Naive thymus-derived CD4-positive, alpha-beta T cell (primary cell): ENCODE measurements at regions of chr14 and their contacts with region 1.

Region 1: GRCh38 chr14:105300792-105301533 is at the start of gene BRF1:
- DNase-seq: peak; percentile 94 to 100 (median 99)
- ATAC-seq: peak; percentile 93
- H3K4me3 ChIP-seq: peak within 1 kb of the TSS; percentile 73
- H3K4me3 Mint-ChIP-seq: peak within 1 kb of the TSS; percentile 75 to 95 (median 90)
- H3K27ac ChIP-seq: peak within 1 kb of the TSS; percentile 94
- H3K27ac Mint-ChIP-seq: peak within 1 kb of the TSS; percentile 86 to 97 (median 94)
- H3K4me1 ChIP-seq: peaks cover 0 to 22% of the 10 kb centered on the region in 2 donors
- H3K4me1 Mint-ChIP-seq: peaks cover 34 to 52% (median 40%) of the 10 kb centered on the region in 7 donors
- H3K27me3 ChIP-seq: no peaks in the 10 kb centered on the region
- H3K27me3 Mint-ChIP-seq: no peaks in the 10 kb centered on the region
- total RNA-seq, gene BRF1: 49.8 to 75.7 (median 61.4) TPM

Region 2: GRCh38 chr14:104383996-104384775 is 916.8 kb before region 1 on chr14:
- CTCF ChIA-PET with region 1: no interaction called
- POLR2A ChIA-PET with region 1: no interaction called
- intact Hi-C with region 1: no loop called
- DNase-seq: no peak
- ATAC-seq: no peak
- H3K4me3 ChIP-seq: no peak overlapping the region
- H3K4me3 Mint-ChIP-seq: no peak overlapping the region
- H3K27ac ChIP-seq: no peak overlapping the region
- H3K27ac Mint-ChIP-seq: peak overlapping the region in 6 of 9 donors; percentile 18 to 77 (median 64)
- H3K4me1 ChIP-seq: peaks cover 5 to 7% of the 10 kb centered on the region in 2 donors
- H3K4me1 Mint-ChIP-seq: peaks cover 4 to 21% (median 10%) of the 10 kb centered on the region in 7 donors
- H3K27me3 ChIP-seq: no peaks in the 10 kb centered on the region
- H3K27me3 Mint-ChIP-seq: peaks cover 0 to 8% (median 0%) of the 10 kb centered on the region in 5 donors

Region 3: GRCh38 chr14:104800015-104800770 is 500.8 kb before region 1 on chr14:
- CTCF ChIA-PET with region 1: no interaction called
- POLR2A ChIA-PET with region 1: no interaction called
- intact Hi-C with region 1: loop called in 1 of 2 experiments (anchors 10 kb)
- DNase-seq: peak in 8 of 9 donors; percentile 55 to 85 (median 68)
- ATAC-seq: peak; percentile 82
- H3K4me3 ChIP-seq: peak overlapping the region; percentile 41
- H3K4me3 Mint-ChIP-seq: peak overlapping the region; percentile 59 to 90 (median 73)
- H3K27ac ChIP-seq: peak overlapping the region; percentile 70
- H3K27ac Mint-ChIP-seq: peak overlapping the region; percentile 32 to 94 (median 88)
- H3K4me1 ChIP-seq: peaks cover 20 to 27% of the 10 kb centered on the region in 2 donors
- H3K4me1 Mint-ChIP-seq: peaks cover 16 to 47% (median 32%) of the 10 kb centered on the region in 7 donors
- H3K27me3 ChIP-seq: no peaks in the 10 kb centered on the region
- H3K27me3 Mint-ChIP-seq: peaks cover 0 to 2% (median 0%) of the 10 kb centered on the region in 5 donors

Region 4: GRCh38 chr14:105020815-105021655 is 279.9 kb before region 1 on chr14 and contains the start of gene CDCA4:
- CTCF ChIA-PET with region 1: no interaction called
- POLR2A ChIA-PET with region 1: interaction called, 8 read pairs
- intact Hi-C with region 1: loop called in 1 of 2 experiments (anchors 1 kb)
- DNase-seq: peak; percentile 93 to 98 (median 97)
- ATAC-seq: peak; percentile 91
- H3K4me3 ChIP-seq: peak within 1 kb of the TSS; percentile 97
- H3K4me3 Mint-ChIP-seq: peak within 1 kb of the TSS; percentile 88 to 99 (median 92)
- H3K27ac ChIP-seq: peak within 1 kb of the TSS; percentile 94
- H3K27ac Mint-ChIP-seq: peak within 1 kb of the TSS; percentile 81 to 97 (median 92)
- H3K4me1 ChIP-seq: peaks cover 25 to 54% of the 10 kb centered on the region in 2 donors
- H3K4me1 Mint-ChIP-seq: peaks cover 38 to 62% (median 41%) of the 10 kb centered on the region in 7 donors
- H3K27me3 ChIP-seq: no peaks in the 10 kb centered on the region
- H3K27me3 Mint-ChIP-seq: no peaks in the 10 kb centered on the region
- total RNA-seq, gene CDCA4: 12.7 to 47.8 (median 14.0) TPM

Region 5: DNA sequence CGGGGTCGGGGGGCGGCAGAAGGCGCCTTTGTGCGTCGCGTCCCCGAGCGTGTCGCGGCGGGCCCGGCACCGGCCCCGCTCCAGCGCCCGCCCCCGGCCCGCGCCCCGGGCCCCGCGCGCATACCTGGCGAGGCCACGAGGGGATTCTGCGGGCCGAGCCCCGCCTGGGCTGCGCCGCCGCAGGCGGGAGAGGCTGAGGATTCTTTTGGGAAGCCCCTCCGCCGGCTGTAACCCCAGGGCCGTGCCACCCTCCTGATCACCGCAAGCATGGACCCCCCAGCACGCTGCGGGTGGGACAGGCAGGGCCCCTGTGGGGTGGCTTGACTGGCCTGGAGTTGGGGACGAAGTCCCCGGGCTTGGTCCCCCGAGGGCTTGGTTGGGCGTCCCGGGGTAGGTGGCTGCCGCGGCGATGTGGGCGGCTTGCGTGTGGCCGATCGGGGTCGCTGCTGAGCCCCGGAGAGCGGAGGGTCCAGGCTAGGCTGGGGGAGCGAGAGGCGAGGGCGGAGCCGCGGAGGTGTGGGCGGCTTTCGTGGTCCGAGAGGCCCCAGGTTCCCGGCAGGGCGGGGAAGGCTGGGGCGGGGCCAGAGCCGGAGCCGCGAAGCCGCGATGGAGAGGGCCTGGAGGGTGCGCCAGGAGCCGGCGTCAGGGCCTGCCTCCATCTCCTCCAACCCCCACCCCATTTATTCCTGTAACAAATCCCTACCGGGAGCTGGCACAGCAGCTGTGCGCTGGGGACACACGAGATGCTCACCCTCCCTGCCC is 207.4 kb before region 1 on chr14:
- CTCF ChIA-PET with region 1: no interaction called
- POLR2A ChIA-PET with region 1: no interaction called
- intact Hi-C with region 1: loop called (anchors 2 to 5 kb)
- DNase-seq: peak in 7 of 9 donors; percentile 23 to 84 (median 31)
- ATAC-seq: peak; percentile 47
- H3K4me3 ChIP-seq: peak overlapping the region; percentile 67
- H3K4me3 Mint-ChIP-seq: peak overlapping the region; percentile 46 to 84 (median 72)
- H3K27ac ChIP-seq: peak overlapping the region; percentile 87
- H3K27ac Mint-ChIP-seq: peak overlapping the region in 6 of 9 donors; percentile 41 to 72 (median 60)
- H3K4me1 ChIP-seq: peaks cover 14 to 15% of the 10 kb centered on the region in 2 donors
- H3K4me1 Mint-ChIP-seq: peaks cover 5 to 22% (median 16%) of the 10 kb centered on the region in 7 donors
- H3K27me3 ChIP-seq: no peaks in the 10 kb centered on the region
- H3K27me3 Mint-ChIP-seq: peaks cover 0 to 4% (median 0%) of the 10 kb centered on the region in 5 donors

Region 6: GRCh38 chr14:105248368-105248756 is 52.6 kb before region 1 on chr14 and contains the start of gene BTBD6:
- CTCF ChIA-PET with region 1: interaction called, 4 read pairs
- POLR2A ChIA-PET with region 1: interaction called, 9 read pairs
- intact Hi-C with region 1: loop called (anchors 1 to 10 kb)
- DNase-seq: peak; percentile 83 to 91 (median 88)
- ATAC-seq: peak; percentile 94
- H3K4me3 ChIP-seq: peak within 1 kb of the TSS; percentile 73
- H3K4me3 Mint-ChIP-seq: peak within 1 kb of the TSS; percentile 69 to 85 (median 80)
- H3K27ac ChIP-seq: peak within 1 kb of the TSS; percentile 79
- H3K27ac Mint-ChIP-seq: peak within 1 kb of the TSS in 8 of 9 donors; percentile 64 to 89 (median 82)
- H3K4me1 ChIP-seq: peaks cover 12 to 14% of the 10 kb centered on the region in 2 donors
- H3K4me1 Mint-ChIP-seq: peaks cover 17 to 52% (median 31%) of the 10 kb centered on the region in 7 donors
- H3K27me3 ChIP-seq: no peaks in the 10 kb centered on the region
- H3K27me3 Mint-ChIP-seq: no peaks in the 10 kb centered on the region
- total RNA-seq, gene BTBD6: 30.8 to 43.0 (median 40.1) TPM

Region 7: DNA sequence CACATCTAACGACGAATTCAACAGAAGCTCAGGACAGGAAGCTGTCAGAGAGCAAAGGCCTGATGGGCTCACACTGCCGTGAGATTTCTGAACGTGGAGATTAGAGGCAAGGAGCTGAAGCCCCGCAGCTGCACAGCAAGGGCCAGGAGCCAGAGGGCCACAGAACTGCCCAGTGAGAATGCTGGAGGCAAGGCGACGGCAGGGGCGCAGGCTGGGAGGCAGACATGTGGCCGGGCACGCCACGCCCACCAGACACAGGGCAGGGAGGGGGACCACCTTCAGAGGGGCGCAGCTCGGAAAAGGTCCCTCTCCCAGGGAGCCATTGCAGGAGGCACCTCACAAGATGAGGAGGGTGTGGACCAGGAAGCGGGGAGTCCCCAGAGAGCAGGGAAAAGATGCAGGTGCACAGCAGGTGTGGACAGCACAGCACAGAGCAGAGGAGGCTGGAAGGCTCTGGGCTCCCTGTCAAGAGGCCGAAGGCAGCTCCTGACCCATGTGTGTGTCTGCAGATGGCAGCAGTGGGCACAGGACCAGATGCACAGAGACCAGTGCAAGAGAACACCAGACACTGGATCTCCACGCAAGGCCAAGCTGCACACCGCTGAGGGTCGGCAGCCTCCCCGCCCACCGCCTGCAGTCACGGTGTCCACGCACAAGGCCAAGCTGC is 29.6 kb before region 1 on chr14:
- CTCF ChIA-PET with region 1: no interaction called
- POLR2A ChIA-PET with region 1: no interaction called
- intact Hi-C with region 1: no loop called
- DNase-seq: no peak
- ATAC-seq: no peak
- H3K4me3 ChIP-seq: no peak overlapping the region
- H3K4me3 Mint-ChIP-seq: no peak overlapping the region
- H3K27ac ChIP-seq: no peak overlapping the region
- H3K27ac Mint-ChIP-seq: no peak overlapping the region
- H3K4me1 ChIP-seq: no peaks in the 10 kb centered on the region
- H3K4me1 Mint-ChIP-seq: peaks cover 0 to 22% (median 5%) of the 10 kb centered on the region in 7 donors
- H3K27me3 ChIP-seq: no peaks in the 10 kb centered on the region
- H3K27me3 Mint-ChIP-seq: no peaks in the 10 kb centered on the region

Region 8: GRCh38 chr14:105330491-105330895 is 29.5 kb after region 1 on chr14:
- CTCF ChIA-PET with region 1: no interaction called
- POLR2A ChIA-PET with region 1: no interaction called
- intact Hi-C with region 1: no loop called
- DNase-seq: no peak
- ATAC-seq: no peak
- H3K4me3 ChIP-seq: no peak overlapping the region
- H3K4me3 Mint-ChIP-seq: peak overlapping the region in 6 of 10 donors; percentile 29 to 66 (median 40)
- H3K27ac ChIP-seq: no peak overlapping the region
- H3K27ac Mint-ChIP-seq: peak overlapping the region in 1 of 9 donors; percentile 51
- H3K4me1 ChIP-seq: peaks cover 0 to 30% of the 10 kb centered on the region in 2 donors
- H3K4me1 Mint-ChIP-seq: peaks cover 16 to 48% (median 36%) of the 10 kb centered on the region in 7 donors
- H3K27me3 ChIP-seq: no peaks in the 10 kb centered on the region
- H3K27me3 Mint-ChIP-seq: no peaks in the 10 kb centered on the region

Region 9: GRCh38 chr14:105398044-105398725 is 97.2 kb after region 1 on chr14 and contains the start of gene TEX22:
- CTCF ChIA-PET with region 1: no interaction called
- POLR2A ChIA-PET with region 1: no interaction called
- intact Hi-C with region 1: loop called in 1 of 2 experiments (anchors 1 kb)
- DNase-seq: peak; percentile 75 to 98 (median 84)
- ATAC-seq: peak; percentile 93
- H3K4me3 ChIP-seq: peak within 1 kb of the TSS; percentile 63
- H3K4me3 Mint-ChIP-seq: peak within 1 kb of the TSS; percentile 78 to 95 (median 83)
- H3K27ac ChIP-seq: peak within 1 kb of the TSS; percentile 87
- H3K27ac Mint-ChIP-seq: peak within 1 kb of the TSS; percentile 57 to 95 (median 86)
- H3K4me1 ChIP-seq: peaks cover 20 to 25% of the 10 kb centered on the region in 2 donors
- H3K4me1 Mint-ChIP-seq: peaks cover 6 to 29% (median 18%) of the 10 kb centered on the region in 7 donors
- H3K27me3 ChIP-seq: no peaks in the 10 kb centered on the region
- H3K27me3 Mint-ChIP-seq: no peaks in the 10 kb centered on the region
- total RNA-seq, gene TEX22: 1.4 to 10.5 (median 6.5) TPM

Region 10: DNA sequence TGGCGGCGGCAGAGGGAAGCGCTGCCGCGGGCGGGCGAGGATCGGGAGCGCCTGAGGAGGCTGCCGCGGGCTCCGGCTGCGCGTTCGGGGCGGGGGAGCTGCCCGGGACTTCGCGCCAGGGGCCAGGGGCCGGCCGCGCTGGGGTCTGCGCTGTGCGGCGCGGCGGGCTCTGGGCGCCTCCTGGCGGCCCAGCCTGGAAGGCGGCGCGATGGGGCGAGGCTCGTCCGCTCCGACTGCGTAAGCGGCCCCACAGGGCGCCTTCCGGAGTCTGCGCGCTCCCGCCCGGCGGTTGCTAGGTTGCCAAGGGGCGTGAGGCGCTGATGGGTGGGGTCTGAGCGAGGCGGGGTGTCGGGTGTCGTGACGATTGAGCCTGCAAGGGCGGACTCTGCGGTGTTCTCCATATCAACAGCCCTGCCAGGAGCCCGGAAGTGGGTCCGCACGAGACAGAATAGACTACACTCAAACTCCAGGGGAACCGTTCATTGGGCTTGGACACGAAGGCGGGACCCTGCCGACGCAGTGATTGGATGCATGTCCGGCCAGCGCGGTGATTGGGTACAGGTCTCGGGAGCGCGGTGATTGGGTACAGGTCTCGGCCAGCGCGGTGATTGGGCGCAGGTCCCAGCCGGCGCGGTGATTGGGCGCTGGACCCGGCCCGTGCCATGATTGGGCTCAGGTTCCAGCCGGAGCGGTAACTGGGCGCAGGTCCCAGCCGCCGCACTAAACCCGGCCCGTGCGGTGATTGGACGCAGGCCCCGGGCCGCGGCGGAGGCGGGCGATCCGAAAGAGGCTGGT is 189.8 kb after region 1 on chr14 and contains the start of gene TEDC1:
- CTCF ChIA-PET with region 1: no interaction called
- POLR2A ChIA-PET with region 1: interaction called, 6 read pairs
- intact Hi-C with region 1: loop called (anchors 1 kb)
- DNase-seq: peak; percentile 96 to 100 (median 100)
- ATAC-seq: peak; percentile 75
- H3K4me3 ChIP-seq: peak within 1 kb of the TSS; percentile 85
- H3K4me3 Mint-ChIP-seq: peak within 1 kb of the TSS; percentile 79 to 95 (median 86)
- H3K27ac ChIP-seq: peak within 1 kb of the TSS; percentile 100
- H3K27ac Mint-ChIP-seq: peak within 1 kb of the TSS; percentile 84 to 99 (median 96)
- H3K4me1 ChIP-seq: peaks cover 16 to 24% of the 10 kb centered on the region in 2 donors
- H3K4me1 Mint-ChIP-seq: peaks cover 5 to 24% (median 19%) of the 10 kb centered on the region in 7 donors
- H3K27me3 ChIP-seq: no peaks in the 10 kb centered on the region
- H3K27me3 Mint-ChIP-seq: no peaks in the 10 kb centered on the region
- total RNA-seq, gene TEDC1: 19.7 to 294 (median 31.3) TPM

Region 11: DNA sequence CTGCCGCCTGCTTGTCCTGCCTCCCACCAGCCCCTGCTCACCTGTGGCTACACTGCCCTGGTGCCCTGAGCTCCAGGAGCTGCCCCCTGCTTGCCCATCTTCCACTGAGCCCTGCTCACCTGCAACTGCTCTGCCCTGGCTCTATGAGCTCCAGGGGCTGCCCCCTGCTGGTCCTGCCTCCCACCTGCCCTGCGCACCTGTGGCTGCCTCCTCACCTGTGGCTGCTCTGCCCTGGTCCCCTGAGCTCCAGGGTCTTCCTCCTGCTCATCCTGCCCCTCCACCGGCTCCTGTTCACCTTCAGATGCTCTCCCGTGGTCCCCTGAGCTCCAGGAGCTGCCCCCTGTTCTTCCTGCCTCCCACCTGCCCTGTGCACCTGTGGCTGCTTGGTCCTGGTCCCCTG is 473.0 kb after region 1 on chr14:
- CTCF ChIA-PET with region 1: no interaction called
- POLR2A ChIA-PET with region 1: no interaction called
- intact Hi-C with region 1: no loop called
- DNase-seq: no peak
- ATAC-seq: no peak
- H3K4me3 ChIP-seq: no peak overlapping the region
- H3K4me3 Mint-ChIP-seq: peak overlapping the region in 1 of 10 donors; percentile 51
- H3K27ac ChIP-seq: no peak overlapping the region
- H3K27ac Mint-ChIP-seq: no peak overlapping the region
- H3K4me1 ChIP-seq: no peaks in the 10 kb centered on the region
- H3K4me1 Mint-ChIP-seq: peaks cover 0 to 8% (median 0%) of the 10 kb centered on the region in 7 donors
- H3K27me3 ChIP-seq: no peaks in the 10 kb centered on the region
- H3K27me3 Mint-ChIP-seq: peaks cover 0 to 18% (median 7%) of the 10 kb centered on the region in 5 donors